Transverse colon (tissue), 4 donors: ENCODE measurements at regions of chr22 and their contacts with region 1.

Region 1: DNA sequence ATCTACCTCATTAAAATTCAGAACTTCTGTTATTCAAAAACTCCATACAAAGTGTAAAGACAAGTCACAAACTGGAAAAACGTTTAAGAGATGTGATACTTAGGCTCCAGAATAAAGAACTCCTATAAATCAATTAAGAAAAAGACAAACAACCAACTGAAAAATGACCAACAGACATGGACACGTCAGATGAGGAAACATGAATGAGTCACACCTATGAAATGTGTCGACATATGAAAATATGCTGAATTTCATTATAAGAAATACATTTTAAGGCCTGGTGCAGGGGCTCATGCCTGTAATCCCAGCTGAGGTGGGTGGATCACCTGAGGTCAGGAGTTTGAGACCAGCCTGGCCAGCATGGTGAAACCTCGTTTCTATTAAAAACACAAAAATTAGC is 78.7 kb downstream of the ENTHD1 start:
- DNase-seq: no peak
- H3K4me3 ChIP-seq: no peak overlapping the region
- H3K27ac ChIP-seq: no peak overlapping the region
- H3K4me1 ChIP-seq: no peaks in the 10 kb centered on the region
- H3K27me3 ChIP-seq: peaks cover 13% of the 10 kb centered on the region
- CTCF ChIP-seq: no peak
- EP300 ChIP-seq: no peak
- POLR2A ChIP-seq: no peak

Region 2: DNA sequence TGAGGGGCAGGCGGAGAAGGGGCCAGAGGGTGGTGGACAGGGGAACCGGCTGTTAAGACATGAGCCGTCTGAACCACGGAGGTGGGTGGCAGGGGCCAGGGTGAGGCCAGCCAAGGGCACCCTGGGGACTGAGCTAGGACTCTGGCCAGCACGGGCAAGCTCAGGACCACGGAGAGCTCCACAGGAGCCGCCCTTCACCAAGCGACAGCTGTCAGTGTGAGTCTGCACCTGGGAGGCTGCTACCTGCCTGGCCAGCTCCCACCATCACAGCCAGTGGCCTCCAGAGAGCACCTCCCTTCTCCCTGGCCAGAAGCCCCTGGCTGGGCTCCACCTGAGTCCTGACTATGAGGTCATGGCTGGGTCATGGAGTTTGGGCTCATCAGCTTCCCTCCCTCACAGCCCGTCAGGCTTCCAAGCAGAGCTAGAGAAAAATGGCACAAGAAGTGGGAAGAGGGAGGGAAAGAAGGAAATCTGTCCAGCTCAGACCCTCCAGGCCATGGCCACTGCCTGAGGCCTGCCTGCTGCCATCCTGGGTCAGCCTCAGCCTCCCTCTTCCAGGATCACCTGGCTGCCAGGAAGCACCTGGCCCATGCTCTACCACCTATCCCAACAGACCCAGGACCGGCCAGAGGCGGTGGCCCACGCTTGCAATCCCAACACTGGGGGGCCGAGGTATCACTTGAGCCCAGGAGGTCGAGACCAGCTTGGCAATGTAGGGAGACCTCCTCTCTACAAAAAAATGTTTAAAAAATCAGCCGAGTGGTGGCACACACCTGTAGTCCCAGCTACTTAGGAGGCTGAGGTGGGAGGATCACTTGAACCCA is 336.2 kb before region 1 on chr22:
- in situ Hi-C with region 1: no loop called
- intact Hi-C with region 1: loop called (anchors 5 kb)
- DNase-seq: no peak
- H3K4me3 ChIP-seq: no peak overlapping the region
- H3K27ac ChIP-seq: no peak overlapping the region
- H3K4me1 ChIP-seq: peaks cover 7 to 16% (median 14%) of the 10 kb centered on the region in 4 donors
- H3K27me3 ChIP-seq: no peaks in the 10 kb centered on the region
- CTCF ChIP-seq: no peak
- EP300 ChIP-seq: no peak
- POLR2A ChIP-seq: no peak